Caco-2 (cell line): ENCODE measurements at regions of chr5 and their contacts with region 1.

Region 1: DNA sequence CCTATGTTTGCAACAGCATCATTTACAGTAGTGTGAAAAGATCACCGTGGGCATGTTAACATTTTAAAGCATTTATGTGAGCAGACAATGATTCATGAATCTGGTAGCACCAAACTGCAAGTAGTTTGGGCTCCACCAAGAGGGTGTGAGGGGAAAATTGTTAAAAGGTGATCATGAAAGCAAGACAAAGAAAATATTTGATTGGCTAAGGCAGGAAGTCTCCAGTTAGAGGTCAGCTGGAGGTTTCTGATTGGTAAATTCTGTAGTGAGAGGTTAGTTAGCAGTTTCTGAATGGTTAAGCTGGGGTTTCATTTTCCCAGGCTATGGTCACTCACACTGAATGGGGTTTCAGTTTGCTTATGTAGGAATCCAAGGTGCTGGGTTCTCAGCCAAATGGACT is 13.5 kb upstream of the DRD1 start:
- DNase-seq: peak in 1 of 2 experiments; percentile 33
- H3K4me3 ChIP-seq: no peak overlapping the region
- H3K4me3 Mint-ChIP-seq: no peak overlapping the region
- H3K27ac Mint-ChIP-seq: no peak overlapping the region
- H3K4me1 ChIP-seq: peaks cover 16% of the 10 kb centered on the region
- H3K4me1 Mint-ChIP-seq: peaks cover 11% of the 10 kb centered on the region
- H3K27me3 ChIP-seq: no peaks in the 10 kb centered on the region
- H3K27me3 Mint-ChIP-seq: no peaks in the 10 kb centered on the region
- CTCF ChIP-seq: peak in 1 of 2 experiments; percentile 30

Region 2: DNA sequence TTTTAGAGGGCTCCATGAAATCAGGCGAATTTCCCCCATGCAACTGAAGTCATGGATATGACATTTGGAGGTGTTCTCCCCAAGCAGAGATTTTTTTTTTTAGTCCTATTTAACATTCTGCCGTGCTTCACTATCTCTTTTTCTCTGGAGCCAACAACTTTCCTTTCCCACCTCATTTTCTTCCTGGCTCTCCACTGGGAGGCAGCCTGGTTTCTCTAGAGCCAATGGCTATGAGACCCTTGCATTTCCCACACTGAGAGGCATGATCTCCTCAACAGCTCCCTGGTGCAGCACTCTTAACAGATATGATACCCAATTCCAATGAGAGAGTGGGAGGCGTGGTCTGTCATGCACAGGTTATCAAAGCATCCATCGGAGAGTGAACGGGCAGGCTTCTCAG is 324.3 kb before region 1 on chr5:
- CTCF ChIA-PET with region 1: no interaction called
- POLR2A ChIA-PET with region 1: no interaction called
- intact Hi-C with region 1: loop called (anchors 2 kb)
- DNase-seq: peak in 1 of 2 experiments; percentile 10
- H3K4me3 ChIP-seq: no peak overlapping the region
- H3K4me3 Mint-ChIP-seq: no peak overlapping the region
- H3K27ac Mint-ChIP-seq: no peak overlapping the region
- H3K4me1 ChIP-seq: no peaks in the 10 kb centered on the region
- H3K4me1 Mint-ChIP-seq: no peaks in the 10 kb centered on the region
- H3K27me3 ChIP-seq: no peaks in the 10 kb centered on the region
- H3K27me3 Mint-ChIP-seq: peaks cover 3% of the 10 kb centered on the region
- CTCF ChIP-seq: no peak

Region 3: DNA sequence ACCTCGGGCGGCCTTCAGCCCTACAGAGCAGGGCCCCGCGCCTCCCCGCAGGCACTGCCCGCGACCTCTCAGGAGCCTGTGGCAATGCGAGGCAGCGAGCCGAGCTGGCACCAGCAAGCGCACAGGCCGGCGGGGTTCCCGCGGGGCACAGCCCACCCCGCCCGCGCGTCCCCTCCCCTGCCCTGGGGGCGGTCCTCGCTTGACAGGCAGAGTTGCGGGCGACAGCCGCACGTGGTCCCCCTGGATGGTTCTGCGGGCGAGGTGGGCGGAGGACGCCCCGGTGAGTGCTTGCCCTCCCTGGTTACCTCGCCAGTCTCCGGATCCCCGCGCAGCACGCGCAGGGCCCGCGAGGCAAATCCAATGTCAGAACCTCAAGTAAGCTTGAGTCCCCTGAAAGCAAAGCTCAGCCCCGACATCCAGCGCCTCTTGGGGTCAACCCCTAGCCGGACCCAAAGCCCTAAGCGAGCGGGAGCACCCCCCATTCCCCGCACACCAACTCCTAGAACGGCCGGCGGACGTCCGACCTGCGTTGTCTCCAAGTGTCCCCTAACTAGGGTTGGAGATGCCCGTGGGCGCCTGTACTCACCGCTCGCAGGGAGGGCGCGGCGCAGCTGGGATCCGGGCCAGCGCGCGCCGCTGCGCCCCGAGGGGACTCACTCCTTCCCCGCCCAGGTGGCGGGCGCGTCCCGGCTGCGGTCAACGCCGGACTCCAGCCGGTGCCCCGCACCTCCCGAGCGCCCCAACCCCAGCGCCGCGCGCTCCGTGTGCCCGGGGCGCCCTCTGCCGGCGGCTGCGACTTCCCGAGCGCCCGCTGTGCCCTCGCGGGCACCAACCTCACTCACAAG is 13.2 kb before region 1 on chr5 and contains the start of gene DRD1:
- CTCF ChIA-PET with region 1: no interaction called
- POLR2A ChIA-PET with region 1: no interaction called
- intact Hi-C with region 1: no loop called
- DNase-seq: peak in 1 of 2 experiments; percentile 31
- H3K4me3 ChIP-seq: no peak within 1 kb of the TSS
- H3K4me3 Mint-ChIP-seq: no peak within 1 kb of the TSS
- H3K27ac Mint-ChIP-seq: peak within 1 kb of the TSS; percentile 32
- H3K4me1 ChIP-seq: no peaks in the 10 kb centered on the region
- H3K4me1 Mint-ChIP-seq: no peaks in the 10 kb centered on the region
- H3K27me3 ChIP-seq: no peaks in the 10 kb centered on the region
- H3K27me3 Mint-ChIP-seq: no peaks in the 10 kb centered on the region
- CTCF ChIP-seq: peak in 1 of 2 experiments; percentile 40
- total RNA-seq, gene DRD1: not detected in 2 replicates

Region 4: DNA sequence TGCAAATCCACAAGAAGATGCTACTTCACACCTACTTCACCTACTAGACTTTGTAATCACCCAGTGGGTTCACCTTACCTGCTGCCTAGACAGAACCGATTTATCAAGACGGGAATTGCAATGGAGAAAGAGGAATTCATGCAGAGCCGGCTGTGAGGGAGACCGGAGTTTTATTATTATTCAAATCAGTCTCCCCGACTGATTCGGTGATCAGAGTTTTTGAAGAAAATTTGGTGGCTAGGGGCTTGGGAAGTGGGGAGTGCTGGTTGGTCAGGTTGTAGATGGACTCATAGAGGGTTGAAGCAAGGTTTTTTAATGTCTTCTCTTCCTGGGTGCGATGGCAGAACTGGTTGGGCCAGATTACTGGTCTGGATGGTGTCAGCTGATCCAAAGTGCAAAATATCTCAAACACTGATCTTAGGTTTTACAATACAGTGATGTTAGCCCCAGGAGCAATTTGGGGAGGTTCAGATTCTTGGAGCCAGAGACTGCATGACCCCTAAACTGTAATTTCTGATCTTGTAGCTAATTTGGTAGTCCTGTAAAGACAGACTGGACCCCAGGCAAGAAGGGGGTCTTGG is 44.4 kb after region 1 on chr5:
- CTCF ChIA-PET with region 1: no interaction called
- POLR2A ChIA-PET with region 1: no interaction called
- intact Hi-C with region 1: no loop called
- DNase-seq: peak in 1 of 2 experiments; percentile 35
- H3K4me3 ChIP-seq: no peak overlapping the region
- H3K4me3 Mint-ChIP-seq: peak overlapping the region; percentile 37
- H3K27ac Mint-ChIP-seq: no peak overlapping the region
- H3K4me1 ChIP-seq: peaks cover 14% of the 10 kb centered on the region
- H3K4me1 Mint-ChIP-seq: peaks cover 11% of the 10 kb centered on the region
- H3K27me3 ChIP-seq: no peaks in the 10 kb centered on the region
- H3K27me3 Mint-ChIP-seq: no peaks in the 10 kb centered on the region
- CTCF ChIP-seq: no peak